Panc1 (cell line): ENCODE measurements at regions of chrX and their contacts with region 1.

Region 1: DNA sequence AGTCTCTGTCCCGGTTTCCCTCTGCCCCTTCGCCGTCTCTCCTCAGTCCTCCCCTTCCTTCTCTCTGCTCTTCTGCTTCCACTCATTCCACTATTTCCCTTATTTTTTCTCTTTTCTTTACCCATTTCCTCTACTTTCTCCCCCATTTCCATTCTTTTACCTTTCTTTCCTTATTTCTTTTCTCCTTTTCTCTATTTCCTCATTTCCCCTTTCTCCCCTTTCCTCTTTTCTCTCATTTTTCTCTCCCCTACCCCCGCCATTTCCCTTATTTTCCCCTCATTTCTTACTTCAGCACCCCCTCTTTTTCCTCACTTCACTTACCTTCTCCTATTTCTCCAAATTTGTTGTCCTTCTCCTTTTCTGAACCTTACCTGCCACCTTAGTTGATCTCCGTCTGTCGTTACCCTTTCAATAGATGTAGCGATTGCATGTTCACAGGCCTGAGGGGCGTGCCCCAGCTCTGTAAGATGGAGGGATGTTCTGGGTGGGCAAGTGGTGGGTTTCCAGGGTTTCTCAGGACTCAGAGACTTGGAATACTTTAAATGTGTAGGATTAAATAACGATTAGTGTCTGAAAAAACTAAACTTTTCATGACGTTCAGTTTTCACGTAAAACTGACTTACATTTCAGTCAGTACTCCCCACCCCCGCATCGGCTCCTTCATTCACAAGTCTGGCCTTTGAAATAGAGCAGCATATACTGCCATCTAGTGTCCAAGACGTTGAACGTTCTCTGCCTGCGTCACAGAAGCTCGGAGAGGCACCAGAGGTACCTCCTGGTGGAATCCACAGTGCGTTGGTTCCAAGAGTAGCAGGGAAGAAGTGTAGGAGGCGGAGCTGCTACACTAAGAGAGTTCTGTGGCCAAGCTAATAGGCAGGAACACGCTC is 641 bp upstream of the NCBP2L start:
- DNase-seq: peak; percentile 78
- ATAC-seq: peak; percentile 92
- H3K4me3 ChIP-seq: peak overlapping the region; percentile 42 to 71
- H3K27ac ChIP-seq: no peak overlapping the region; the same call in 1 of the 2 replicates
- H3K4me1 ChIP-seq: peaks cover 7% of the 10 kb centered on the region
- H3K27me3 ChIP-seq: no peaks in the 10 kb centered on the region; the same call in 1 of the 2 replicates
- CTCF ChIP-seq: peak; percentile 78

Region 2: DNA sequence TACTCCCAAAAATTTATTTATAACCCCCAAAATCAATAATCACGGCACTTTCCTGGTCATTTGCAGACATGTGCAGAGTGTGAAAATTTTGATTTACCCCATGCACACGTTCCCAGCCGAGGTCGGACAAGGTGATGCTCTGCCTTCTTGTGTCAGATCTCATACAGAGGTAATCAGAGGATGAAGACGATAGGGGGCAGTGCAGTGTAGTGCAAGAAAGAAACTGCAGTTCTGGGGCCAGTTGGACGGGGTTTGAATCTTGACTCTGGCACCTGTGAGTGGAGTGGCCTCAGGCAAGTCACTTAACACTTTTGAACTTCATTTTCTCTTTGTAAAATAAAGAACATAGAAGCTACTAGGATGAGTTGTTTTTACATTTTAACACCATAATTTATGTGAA is 239.1 kb before region 1 on chrX:
- CTCF ChIA-PET with region 1: no interaction called
- POLR2A ChIA-PET with region 1: no interaction called
- in situ Hi-C with region 1: no loop called
- intact Hi-C with region 1: loop called (anchors 10 kb)
- DNase-seq: peak; percentile 41
- ATAC-seq: peak; percentile 89
- H3K4me3 ChIP-seq: no peak overlapping the region
- H3K27ac ChIP-seq: no peak overlapping the region
- H3K4me1 ChIP-seq: no peaks in the 10 kb centered on the region
- H3K27me3 ChIP-seq: no peaks in the 10 kb centered on the region
- CTCF ChIP-seq: peak; percentile 81

Region 3: GRCh38 chrX:107672955-107673378 is 103.9 kb before region 1 on chrX:
- CTCF ChIA-PET with region 1: interaction called, 14 read pairs
- POLR2A ChIA-PET with region 1: no interaction called
- in situ Hi-C with region 1: no loop called
- intact Hi-C with region 1: loop called (anchors 5 kb)
- DNase-seq: no peak
- ATAC-seq: 0 out of 2 replicates have a peak, but pooled peaks have one; percentile 31
- H3K4me3 ChIP-seq: no peak overlapping the region
- H3K27ac ChIP-seq: no peak overlapping the region
- H3K4me1 ChIP-seq: peaks cover 25% of the 10 kb centered on the region
- H3K27me3 ChIP-seq: no peaks in the 10 kb centered on the region
- CTCF ChIP-seq: peak; percentile 89

Region 4: GRCh38 chrX:107716816-107717700 is 59.8 kb before region 1 on chrX:
- CTCF ChIA-PET with region 1: interaction called, 4 read pairs
- POLR2A ChIA-PET with region 1: no interaction called
- in situ Hi-C with region 1: no loop called
- intact Hi-C with region 1: loop called (anchors 2 kb)
- DNase-seq: no peak
- ATAC-seq: peak; percentile 71
- H3K4me3 ChIP-seq: peak overlapping the region; percentile 64 to 87
- H3K27ac ChIP-seq: peak overlapping the region; percentile 58; the same call in 1 of the 2 replicates
- H3K4me1 ChIP-seq: peaks cover 8% of the 10 kb centered on the region; the same call in 1 of the 2 replicates
- H3K27me3 ChIP-seq: no peaks in the 10 kb centered on the region
- CTCF ChIP-seq: no peak

Region 5: GRCh38 chrX:107747596-107748161 is 29.2 kb before region 1 on chrX:
- CTCF ChIA-PET with region 1: no interaction called
- POLR2A ChIA-PET with region 1: no interaction called
- in situ Hi-C with region 1: no loop called
- intact Hi-C with region 1: no loop called
- DNase-seq: no peak
- ATAC-seq: no peak
- H3K4me3 ChIP-seq: no peak overlapping the region
- H3K27ac ChIP-seq: no peak overlapping the region
- H3K4me1 ChIP-seq: no peaks in the 10 kb centered on the region
- H3K27me3 ChIP-seq: peaks cover 3% of the 10 kb centered on the region; the same call in 1 of the 2 replicates
- CTCF ChIP-seq: no peak

Region 6: DNA sequence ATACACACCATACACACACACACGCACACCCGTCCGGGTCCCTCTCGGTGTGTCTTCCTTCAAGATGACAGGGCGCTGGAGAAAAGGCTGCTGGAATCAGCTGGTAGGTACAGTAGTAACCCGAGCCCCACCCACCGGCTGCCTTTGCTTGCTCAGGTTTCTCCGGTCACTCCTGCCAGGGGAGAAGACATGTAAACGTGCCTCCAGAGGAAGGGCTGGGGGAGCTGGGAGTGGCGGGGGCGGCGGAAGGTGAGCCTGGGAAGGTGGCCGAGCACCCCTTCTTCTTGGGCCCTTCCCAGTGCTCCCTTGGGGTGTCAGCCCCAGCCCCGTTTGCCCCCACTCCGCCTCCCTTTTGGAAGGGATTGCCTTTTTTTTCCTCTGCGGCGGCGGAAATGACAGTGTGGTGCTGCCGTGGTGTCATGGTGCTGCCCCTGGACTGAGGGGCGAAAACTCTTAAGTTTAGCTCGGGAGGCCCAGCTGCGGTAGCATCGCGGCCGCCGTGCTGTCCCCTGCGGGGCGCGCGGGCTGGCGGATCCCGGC is 48.9 kb after region 1 on chrX and contains the start of gene MID2:
- CTCF ChIA-PET with region 1: no interaction called
- POLR2A ChIA-PET with region 1: no interaction called
- in situ Hi-C with region 1: no loop called
- intact Hi-C with region 1: no loop called
- DNase-seq: no peak
- ATAC-seq: peak; percentile 81
- H3K4me3 ChIP-seq: peak within 1 kb of the TSS; percentile 51 to 76
- H3K27ac ChIP-seq: peak within 1 kb of the TSS; percentile 89
- H3K4me1 ChIP-seq: peaks cover 10% of the 10 kb centered on the region
- H3K27me3 ChIP-seq: no peaks in the 10 kb centered on the region
- CTCF ChIP-seq: no peak
- total RNA-seq, gene MID2: 24.7 TPM

Region 7: GRCh38 chrX:108070891-108071290 is 294.0 kb after region 1 on chrX:
- CTCF ChIA-PET with region 1: no interaction called
- POLR2A ChIA-PET with region 1: no interaction called
- in situ Hi-C with region 1: no loop called
- intact Hi-C with region 1: loop called (anchors 5 kb)
- DNase-seq: no peak
- ATAC-seq: peak; percentile 73; the same call in 1 of the 2 replicates
- H3K4me3 ChIP-seq: no peak overlapping the region
- H3K27ac ChIP-seq: no peak overlapping the region
- H3K4me1 ChIP-seq: peaks cover 5% of the 10 kb centered on the region
- H3K27me3 ChIP-seq: no peaks in the 10 kb centered on the region
- CTCF ChIP-seq: no peak